Mammary epithelial cell (primary cell): ENCODE measurements at regions of chr6 and their contacts with region 1.

Region 1: GRCh38 chr6:71181565-71181964 is 107.0 kb upstream of the OGFRL1 start:
- DNase-seq: peak; percentile 81
- H3K4me3 ChIP-seq: no peak overlapping the region
- H3K27ac ChIP-seq: peak overlapping the region; percentile 4
- H3K4me1 ChIP-seq: peaks cover 15% of the 10 kb centered on the region
- H3K27me3 ChIP-seq: no peaks in the 10 kb centered on the region
- CTCF ChIP-seq: no peak

Region 2: GRCh38 chr6:71139249-71139648 is 42.3 kb before region 1 on chr6:
- CTCF ChIA-PET with region 1: no interaction called
- dilution Hi-C with region 1: no loop called
- in situ Hi-C with region 1: no loop called
- intact Hi-C with region 1: loop called (anchors 5 kb)
- DNase-seq: peak; percentile 73
- H3K4me3 ChIP-seq: no peak overlapping the region
- H3K27ac ChIP-seq: no peak overlapping the region
- H3K4me1 ChIP-seq: peaks cover 19% of the 10 kb centered on the region
- H3K27me3 ChIP-seq: no peaks in the 10 kb centered on the region
- CTCF ChIP-seq: no peak

Region 3: DNA sequence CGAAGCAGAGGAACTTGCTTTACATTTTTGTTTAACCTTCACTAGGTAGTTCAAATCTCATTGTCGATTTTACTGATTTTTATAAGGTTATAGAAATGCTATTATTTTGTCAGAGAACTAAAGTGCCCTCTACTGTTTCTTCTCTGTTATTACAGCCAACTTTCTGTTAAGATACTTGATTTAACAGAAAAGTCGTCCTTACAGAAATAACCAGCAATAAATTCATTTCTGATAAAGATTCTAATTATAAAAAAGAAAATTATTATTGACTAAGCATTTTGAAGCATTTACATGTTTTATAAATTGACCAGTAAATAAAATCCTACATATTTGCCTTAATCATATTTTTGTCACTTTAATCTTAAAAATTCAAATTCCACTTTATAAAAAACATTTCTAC is 167.8 kb after region 1 on chr6:
- CTCF ChIA-PET with region 1: no interaction called
- dilution Hi-C with region 1: no loop called
- in situ Hi-C with region 1: loop called in 1 of 2 experiments (anchors 10 kb)
- intact Hi-C with region 1: no loop called
- DNase-seq: no peak
- H3K4me3 ChIP-seq: no peak overlapping the region
- H3K27ac ChIP-seq: no peak overlapping the region
- H3K4me1 ChIP-seq: peaks cover 8% of the 10 kb centered on the region
- H3K27me3 ChIP-seq: no peaks in the 10 kb centered on the region
- CTCF ChIP-seq: peak; percentile 49 to 68